Calu3 (cell line): ENCODE measurements at regions of chr5 and their contacts with region 1.

Region 1: DNA sequence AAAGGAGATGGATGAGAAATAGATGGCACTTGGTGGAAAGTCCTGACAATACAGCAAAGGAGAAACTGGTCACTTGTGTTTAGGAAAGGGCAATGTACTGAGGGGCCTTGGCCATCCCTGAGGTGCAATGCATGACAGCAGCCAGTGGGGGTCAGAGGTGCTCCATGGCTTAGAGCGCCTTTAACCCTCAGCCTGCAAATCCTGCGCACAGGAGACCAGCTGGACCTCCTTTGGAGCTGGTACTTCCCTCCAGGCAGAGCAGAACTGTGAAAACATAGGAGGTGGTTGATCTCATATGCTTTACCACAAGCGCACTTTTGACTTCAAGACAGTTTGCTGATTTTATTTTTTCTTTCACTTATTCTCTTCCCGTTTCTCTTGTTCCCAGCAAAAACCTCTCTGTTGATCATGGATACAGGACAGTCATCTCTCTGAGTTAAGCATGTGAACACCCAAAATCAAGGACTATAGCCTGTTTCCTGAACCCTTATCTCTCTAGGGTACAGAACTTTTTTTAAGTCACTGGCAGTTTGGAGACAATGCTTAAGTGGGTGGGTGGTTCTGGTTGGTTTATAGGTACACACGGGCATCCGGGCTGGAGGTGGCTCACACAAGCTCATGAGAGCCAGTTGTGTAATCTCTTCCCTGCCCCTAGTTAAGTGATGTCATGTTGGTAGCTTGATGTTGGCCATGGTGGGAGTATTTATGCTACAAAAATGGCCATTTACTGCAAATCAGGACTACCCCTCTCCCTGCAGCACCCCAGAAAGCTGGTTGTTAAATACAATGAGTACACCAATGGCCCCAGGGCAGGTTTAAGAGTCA is 37.6 kb upstream of the ANKRD55 start:
- DNase-seq: peak; percentile 88
- H3K4me3 Mint-ChIP-seq: no peak overlapping the region
- H3K27ac Mint-ChIP-seq: peak overlapping the region; percentile 81
- H3K4me1 Mint-ChIP-seq: peaks cover 25% of the 10 kb centered on the region
- H3K27me3 Mint-ChIP-seq: no peaks in the 10 kb centered on the region
- CTCF ChIP-seq: peak; percentile 95

Region 2: DNA sequence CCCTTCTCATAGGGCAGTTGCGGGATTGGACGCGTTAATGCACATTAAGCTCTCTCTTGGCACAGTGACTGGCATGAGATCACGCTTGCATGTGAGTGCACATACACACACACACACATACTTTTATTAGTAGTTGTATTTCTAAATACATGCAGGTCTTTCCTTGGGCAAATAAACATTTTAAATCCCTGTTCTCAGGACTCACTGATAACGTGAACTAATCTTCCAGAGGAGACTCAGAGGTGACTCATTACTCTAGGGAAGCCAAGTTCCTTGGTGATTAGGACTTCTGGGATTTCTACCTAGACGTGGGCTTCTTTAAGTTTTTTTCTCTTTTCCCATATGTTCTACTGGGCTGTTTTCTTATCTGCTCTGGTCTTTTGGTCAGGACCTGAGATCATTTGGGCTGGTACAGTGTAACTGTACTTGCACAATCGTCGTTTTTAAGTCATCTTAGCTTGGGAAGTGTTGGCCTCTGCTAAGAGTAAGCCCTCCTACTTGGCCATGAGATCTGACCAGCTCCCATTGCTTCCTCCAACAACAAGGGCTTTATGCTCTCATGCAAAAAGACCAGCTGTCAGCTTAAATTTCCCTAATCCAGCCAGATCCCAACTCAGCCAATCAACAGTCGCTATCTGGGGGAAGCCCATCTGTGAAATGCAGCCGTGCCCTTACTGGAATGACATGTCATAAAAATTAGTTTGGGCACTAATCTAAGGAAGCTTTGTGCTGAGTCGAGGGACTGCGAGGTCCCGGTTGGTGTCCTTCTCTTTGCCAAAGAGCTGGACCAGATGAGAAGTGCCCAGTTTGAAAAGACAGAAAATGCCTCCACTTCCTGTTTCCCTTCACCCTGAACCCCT is 138.8 kb after region 1 on chr5:
- CTCF ChIA-PET with region 1: no interaction called
- intact Hi-C with region 1: loop called (anchors 5 kb)
- DNase-seq: no peak
- H3K4me3 Mint-ChIP-seq: no peak overlapping the region
- H3K27ac Mint-ChIP-seq: no peak overlapping the region
- H3K4me1 Mint-ChIP-seq: peaks cover 67% of the 10 kb centered on the region
- H3K27me3 Mint-ChIP-seq: no peaks in the 10 kb centered on the region
- CTCF ChIP-seq: no peak

Region 3: GRCh38 chr5:56640763-56641406 is 370.1 kb after region 1 on chr5:
- CTCF ChIA-PET with region 1: no interaction called
- intact Hi-C with region 1: loop called (anchors 2 kb)
- DNase-seq: peak; percentile 71
- H3K4me3 Mint-ChIP-seq: peak overlapping the region; percentile 63
- H3K27ac Mint-ChIP-seq: peak overlapping the region; percentile 97
- H3K4me1 Mint-ChIP-seq: peaks cover 70% of the 10 kb centered on the region
- H3K27me3 Mint-ChIP-seq: no peaks in the 10 kb centered on the region
- CTCF ChIP-seq: no peak

Region 4: GRCh38 chr5:56900858-56901578 is 630.2 kb after region 1 on chr5:
- CTCF ChIA-PET with region 1: interaction called, 3 read pairs
- intact Hi-C with region 1: loop called (anchors 2 kb)
- DNase-seq: peak; percentile 54
- H3K4me3 Mint-ChIP-seq: no peak overlapping the region
- H3K27ac Mint-ChIP-seq: no peak overlapping the region
- H3K4me1 Mint-ChIP-seq: no peaks in the 10 kb centered on the region
- H3K27me3 Mint-ChIP-seq: no peaks in the 10 kb centered on the region
- CTCF ChIP-seq: peak; percentile 70